AG04450 (cell line): ENCODE measurements at regions of chr15 and their contacts with region 1.

Region 1: DNA sequence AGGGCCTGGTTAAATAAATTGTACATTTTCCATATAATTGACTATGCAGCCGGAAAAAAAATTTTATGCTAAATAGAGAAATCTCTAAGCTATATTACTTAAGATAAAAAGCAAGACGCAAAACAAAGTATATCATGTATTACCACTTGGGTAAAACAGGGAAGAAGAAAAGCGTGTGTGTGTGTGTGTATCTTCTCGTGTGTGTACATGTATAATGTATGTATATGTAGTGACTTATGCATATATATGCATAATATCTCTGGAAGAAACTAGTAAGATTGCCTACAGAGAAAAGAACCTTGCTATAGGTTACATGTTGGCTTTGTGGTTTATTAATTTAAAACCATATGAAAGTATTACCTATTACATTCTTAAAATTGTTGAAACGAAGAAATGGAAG is 19.0 kb downstream of the KNL1 start:
- DNase-seq: no peak
- H3K4me3 ChIP-seq: no peak overlapping the region
- H3K27ac ChIP-seq: no peak overlapping the region
- H3K27me3 ChIP-seq: no peaks in the 10 kb centered on the region
- CTCF ChIP-seq: no peak

Region 2: DNA sequence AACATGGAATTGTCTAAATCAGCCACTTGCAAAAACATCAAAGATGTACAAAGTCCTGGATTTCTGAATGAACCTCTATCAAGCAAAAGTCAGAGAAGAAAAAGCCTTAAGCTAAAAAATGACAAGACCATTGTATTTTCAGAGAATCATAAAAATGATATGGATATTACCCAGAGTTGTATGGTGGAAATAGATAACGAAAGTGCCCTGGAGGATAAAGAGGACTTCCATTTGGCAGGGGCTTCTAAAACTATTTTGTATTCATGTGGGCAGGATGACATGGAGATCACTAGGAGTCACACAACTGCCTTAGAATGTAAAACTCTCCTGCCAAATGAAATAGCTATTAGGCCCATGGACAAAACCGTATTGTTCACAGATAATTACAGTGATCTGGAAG is 10.3 kb after region 1 on chr15:
- CTCF ChIA-PET with region 1: no interaction called
- POLR2A ChIA-PET with region 1: no interaction called
- DNase-seq: no peak
- H3K4me3 ChIP-seq: no peak overlapping the region
- H3K27ac ChIP-seq: no peak overlapping the region
- H3K27me3 ChIP-seq: no peaks in the 10 kb centered on the region
- CTCF ChIP-seq: no peak

Region 3: GRCh38 chr15:40694688-40695468 is 81.8 kb after region 1 on chr15 and contains the start of gene RAD51:
- CTCF ChIA-PET with region 1: no interaction called
- POLR2A ChIA-PET with region 1: interaction called, 13 read pairs
- DNase-seq: peak; percentile 84
- H3K4me3 ChIP-seq: peak within 1 kb of the TSS; percentile 97
- H3K27ac ChIP-seq: peak within 1 kb of the TSS; percentile 100
- H3K27me3 ChIP-seq: no peaks in the 10 kb centered on the region
- CTCF ChIP-seq: no peak
- polyA plus RNA-seq, gene RAD51: 5.1 and 6.0 TPM in 2 replicates

Region 4: DNA sequence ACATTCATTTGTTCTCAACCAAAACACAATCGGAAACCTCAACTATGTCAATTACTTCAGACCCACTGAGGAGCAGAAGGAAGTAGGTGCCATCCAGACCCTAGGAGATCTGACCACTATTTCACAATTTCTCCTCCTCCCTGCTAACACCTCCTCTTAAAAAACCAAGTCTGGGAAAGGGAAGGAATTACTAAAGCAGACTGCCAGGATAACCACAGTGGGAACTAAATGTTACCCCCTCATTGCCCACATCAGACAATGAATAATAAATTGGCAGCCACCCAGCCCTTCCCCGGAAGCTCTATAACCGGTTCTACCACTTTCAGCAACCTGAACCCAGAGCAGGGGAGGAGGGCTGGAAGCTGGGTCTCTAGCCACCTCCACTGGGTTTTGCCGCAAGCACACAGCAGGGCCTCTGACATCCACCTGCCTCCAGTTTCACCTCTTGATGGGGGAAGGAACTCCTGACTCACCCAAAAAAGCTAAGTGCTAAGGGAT is 174.3 kb after region 1 on chr15:
- CTCF ChIA-PET with region 1: no interaction called
- POLR2A ChIA-PET with region 1: no interaction called
- DNase-seq: no peak
- H3K4me3 ChIP-seq: no peak overlapping the region
- H3K27ac ChIP-seq: no peak overlapping the region
- H3K27me3 ChIP-seq: no peaks in the 10 kb centered on the region
- CTCF ChIP-seq: no peak

Region 5: DNA sequence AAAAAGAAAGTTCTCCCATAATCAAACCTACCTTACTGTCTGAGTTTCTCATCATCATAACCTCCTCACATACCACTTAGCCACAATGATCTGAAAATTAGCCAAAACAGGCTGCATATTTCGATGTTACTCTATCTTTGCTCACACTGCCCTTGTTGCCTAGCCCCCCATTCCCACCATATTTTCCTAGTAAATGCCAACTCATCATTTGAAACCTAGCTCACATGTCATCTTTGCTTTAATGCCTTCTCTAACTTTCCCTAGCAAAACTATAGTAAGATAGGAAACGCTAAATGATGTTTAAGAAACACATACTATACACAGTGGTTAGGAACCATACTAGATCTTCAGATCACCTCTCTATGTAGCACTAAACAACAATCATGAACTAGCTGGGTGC is 438.1 kb after region 1 on chr15:
- CTCF ChIA-PET with region 1: no interaction called
- POLR2A ChIA-PET with region 1: no interaction called
- DNase-seq: no peak
- H3K4me3 ChIP-seq: no peak overlapping the region
- H3K27ac ChIP-seq: no peak overlapping the region
- H3K27me3 ChIP-seq: no peaks in the 10 kb centered on the region
- CTCF ChIP-seq: no peak